ENCODE measurements at regions of chr20 and their contacts with region 1.

Region 1: GRCh38 chr20:32674362-32674789 is 635 bp upstream of the C20orf203 start:
- DNase-seq: peak; percentile 91
- H3K4me3 Mint-ChIP-seq: no peak overlapping the region
- H3K27ac Mint-ChIP-seq: peak overlapping the region; percentile 21
- H3K4me1 Mint-ChIP-seq: peaks cover 12% of the 10 kb centered on the region
- H3K27me3 Mint-ChIP-seq: no peaks in the 10 kb centered on the region

Region 2: DNA sequence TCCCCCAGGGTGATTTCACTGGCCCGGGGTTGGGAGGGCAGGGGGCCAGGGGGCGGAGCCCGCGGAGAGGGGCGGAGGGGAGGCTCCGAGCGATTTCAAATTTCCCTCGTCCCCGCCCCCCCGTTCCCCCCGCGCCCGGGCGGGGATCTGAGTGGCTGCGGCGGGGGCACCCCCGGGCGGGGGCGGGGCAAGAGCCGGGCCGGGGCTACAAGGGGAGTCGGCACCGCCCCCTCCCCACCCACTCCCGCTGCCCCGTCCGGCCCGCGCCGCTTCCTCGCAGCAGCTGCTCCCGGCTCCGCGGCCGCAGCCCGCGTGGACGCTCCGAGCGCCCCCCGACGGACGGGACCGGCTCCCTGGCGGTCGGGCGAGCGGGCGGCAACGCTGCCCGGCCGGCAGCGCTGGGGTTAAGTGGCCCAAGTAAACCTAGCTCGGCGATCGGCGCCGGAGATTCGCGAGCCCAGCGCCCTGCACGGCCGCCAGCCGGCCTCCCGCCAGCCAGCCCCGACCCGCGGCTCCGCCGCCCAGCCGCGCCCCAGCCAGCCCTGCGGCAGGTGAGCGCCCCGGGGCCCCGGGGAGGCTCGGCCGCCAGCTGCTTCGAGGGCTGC is 87.9 kb after region 1 on chr20 and contains the start of gene DNMT3B:
- intact Hi-C with region 1: loop called (anchors 5 kb)
- DNase-seq: peak; percentile 93
- H3K4me3 Mint-ChIP-seq: peak within 1 kb of the TSS; percentile 88
- H3K27ac Mint-ChIP-seq: peak within 1 kb of the TSS; percentile 71
- H3K4me1 Mint-ChIP-seq: peaks cover 11% of the 10 kb centered on the region
- H3K27me3 Mint-ChIP-seq: peaks cover 12% of the 10 kb centered on the region
- total RNA-seq, gene DNMT3B: 1.1 and 1.3 TPM in 2 replicates

Region 3: DNA sequence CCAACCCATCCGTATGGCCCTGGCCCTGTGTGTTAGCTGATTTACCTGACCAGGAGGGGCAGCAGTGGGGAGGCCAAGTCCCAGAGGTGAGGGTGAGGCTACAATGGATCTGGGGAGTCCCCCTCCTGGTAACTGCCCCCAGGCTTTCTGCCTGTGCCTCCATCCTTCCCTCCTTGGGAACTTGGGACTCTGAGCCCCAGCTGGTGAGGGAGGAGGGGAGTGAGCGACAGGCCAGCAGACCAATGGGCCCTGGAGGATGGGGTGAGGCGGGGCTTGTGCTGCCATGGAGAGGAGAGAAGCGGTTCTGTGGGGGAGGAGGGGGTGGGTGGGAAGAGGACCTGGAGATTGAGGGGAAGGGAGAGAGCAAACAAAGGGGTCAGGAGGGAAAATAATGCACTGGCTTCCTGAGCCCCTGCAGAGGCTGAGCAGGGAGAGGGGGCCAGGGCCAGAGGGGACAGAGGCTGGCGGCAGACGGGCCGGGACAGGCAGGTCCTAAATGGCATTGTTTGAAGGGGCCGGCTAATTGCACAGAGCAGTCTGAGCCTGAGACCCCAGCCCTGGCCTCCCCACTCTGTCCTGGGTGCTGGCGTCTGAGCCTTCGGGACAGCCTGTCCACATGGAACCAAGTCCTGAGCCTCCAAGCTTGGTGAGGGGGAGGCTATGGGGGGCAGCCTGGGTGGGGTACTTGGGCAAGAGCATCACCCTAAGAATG is 105.3 kb after region 1 on chr20:
- intact Hi-C with region 1: loop called (anchors 1 kb)
- DNase-seq: no peak
- H3K4me3 Mint-ChIP-seq: no peak overlapping the region
- H3K27ac Mint-ChIP-seq: no peak overlapping the region
- H3K4me1 Mint-ChIP-seq: peaks cover 5% of the 10 kb centered on the region
- H3K27me3 Mint-ChIP-seq: no peaks in the 10 kb centered on the region

Region 4: DNA sequence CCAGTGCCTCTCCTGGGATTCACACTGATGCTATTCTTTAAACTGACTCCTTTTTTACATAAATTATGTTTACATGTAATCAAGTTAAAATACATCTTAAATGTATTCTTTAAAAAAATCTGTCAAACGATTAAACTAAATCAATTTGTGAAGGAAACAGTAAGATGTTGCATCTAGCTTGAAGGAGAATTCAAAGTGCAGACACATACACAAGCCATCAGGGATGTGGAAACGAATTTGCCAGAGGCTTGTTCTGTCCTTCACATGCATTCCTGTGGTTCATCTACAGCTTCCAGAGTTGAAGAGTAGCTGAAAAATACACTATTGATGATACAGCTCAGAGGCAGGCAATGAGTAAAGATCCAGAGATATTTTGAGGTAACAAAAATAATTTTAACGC is 372.0 kb after region 1 on chr20:
- intact Hi-C with region 1: no loop called
- DNase-seq: no peak
- H3K4me3 Mint-ChIP-seq: no peak overlapping the region
- H3K27ac Mint-ChIP-seq: no peak overlapping the region
- H3K4me1 Mint-ChIP-seq: no peaks in the 10 kb centered on the region
- H3K27me3 Mint-ChIP-seq: no peaks in the 10 kb centered on the region